HCT116 (cell line): ENCODE measurements at regions of chr17 and their contacts with region 1.

Region 1: GRCh38 chr17:50783193-50783660 is 15.9 kb upstream of the ANKRD40CL start:
- DNase-seq: peak; percentile 92
- ATAC-seq: peak; percentile 99
- H3K4me3 ChIP-seq: no peak overlapping the region
- H3K27ac ChIP-seq: no peak overlapping the region
- H3K4me1 ChIP-seq: peaks cover 0 to 9% of the 10 kb centered on the region in 2 experiments; a peak in 2 of 4 replicates
- H3K27me3 ChIP-seq: no peaks in the 10 kb centered on the region
- CTCF ChIP-seq: peak; percentile 98 to 100 (median 100)
- POLR2A ChIP-seq: no peak
- RAD21 ChIP-seq: peak; percentile 100

Region 2: GRCh38 chr17:50547035-50547735 is 236.0 kb before region 1 on chr17 and contains the start of gene SPATA20:
- CTCF ChIA-PET with region 1: interaction called, 3 read pairs
- POLR2A ChIA-PET with region 1: no interaction called
- RAD21 ChIA-PET with region 1: no interaction called
- intact Hi-C with region 1: loop called (anchors 2 kb)
- DNase-seq: peak; percentile 80
- ATAC-seq: peak; percentile 75
- H3K4me3 ChIP-seq: peak within 1 kb of the TSS; percentile 65 to 85
- H3K27ac ChIP-seq: peak within 1 kb of the TSS; percentile 75
- H3K4me1 ChIP-seq: peaks cover 27 to 58% of the 10 kb centered on the region in 2 experiments
- H3K27me3 ChIP-seq: no peaks in the 10 kb centered on the region
- CTCF ChIP-seq: peak in 2 of 3 experiments; percentile 98 to 100; a peak in 4 of 6 replicates
- POLR2A ChIP-seq: peak; percentile 79
- RAD21 ChIP-seq: no peak
- total RNA-seq, gene SPATA20: 57.5 TPM

Region 3: GRCh38 chr17:50771991-50772785 is 11.0 kb before region 1 on chr17:
- CTCF ChIA-PET with region 1: interaction called, 10 read pairs
- POLR2A ChIA-PET with region 1: no interaction called
- RAD21 ChIA-PET with region 1: interaction called, 3 to 11 read pairs
- intact Hi-C with region 1: no loop called
- DNase-seq: no peak
- ATAC-seq: no peak
- H3K4me3 ChIP-seq: no peak overlapping the region
- H3K27ac ChIP-seq: no peak overlapping the region
- H3K4me1 ChIP-seq: peaks cover 10% of the 10 kb centered on the region in 2 experiments; a peak in 3 of 4 replicates
- H3K27me3 ChIP-seq: no peaks in the 10 kb centered on the region
- CTCF ChIP-seq: no peak
- POLR2A ChIP-seq: no peak
- RAD21 ChIP-seq: no peak

Region 4: DNA sequence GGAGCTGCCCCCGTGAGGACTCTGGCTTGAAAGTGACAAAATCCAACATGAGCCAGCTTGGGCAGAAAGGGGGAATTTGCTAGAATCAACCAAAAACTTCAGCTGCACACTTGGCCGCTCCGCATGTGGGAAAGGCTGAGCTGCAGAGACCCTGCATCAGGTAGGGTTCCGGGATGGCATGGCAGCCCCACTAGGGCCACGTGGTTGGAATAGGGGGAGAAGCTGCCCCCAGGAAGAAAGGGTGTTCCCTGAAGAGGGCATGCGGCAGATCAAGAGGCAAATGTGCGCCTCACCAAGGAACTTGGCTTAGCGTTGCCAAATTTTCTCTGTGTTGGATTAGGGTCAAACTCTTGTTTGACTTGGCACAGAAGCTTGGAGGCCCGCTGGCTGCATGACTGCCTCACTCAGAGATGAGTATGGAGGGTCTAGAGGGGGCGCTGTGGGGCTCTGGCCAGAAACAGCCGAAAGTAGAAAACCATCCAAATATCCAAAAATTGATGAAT is 23.0 kb after region 1 on chr17:
- CTCF ChIA-PET with region 1: interaction called, 12 read pairs
- POLR2A ChIA-PET with region 1: no interaction called
- RAD21 ChIA-PET with region 1: no interaction called
- intact Hi-C with region 1: no loop called
- DNase-seq: no peak
- ATAC-seq: peak; percentile 67
- H3K4me3 ChIP-seq: no peak overlapping the region
- H3K27ac ChIP-seq: no peak overlapping the region
- H3K4me1 ChIP-seq: peaks cover 0 to 14% of the 10 kb centered on the region in 2 experiments; a peak in 2 of 4 replicates
- H3K27me3 ChIP-seq: no peaks in the 10 kb centered on the region
- CTCF ChIP-seq: peak in 2 of 3 experiments; percentile 51 to 53; a peak in 4 of 6 replicates
- POLR2A ChIP-seq: no peak
- RAD21 ChIP-seq: no peak

Region 5: GRCh38 chr17:50841949-50842354 is 58.7 kb after region 1 on chr17:
- CTCF ChIA-PET with region 1: interaction called, 127 read pairs
- POLR2A ChIA-PET with region 1: interaction called, 12 read pairs
- RAD21 ChIA-PET with region 1: interaction called, 15 to 19 read pairs
- intact Hi-C with region 1: loop called (anchors 1 kb)
- DNase-seq: peak; percentile 61
- ATAC-seq: peak; percentile 95
- H3K4me3 ChIP-seq: no peak overlapping the region
- H3K27ac ChIP-seq: no peak overlapping the region
- H3K4me1 ChIP-seq: peaks cover 0 to 22% of the 10 kb centered on the region in 2 experiments; a peak in 2 of 4 replicates
- H3K27me3 ChIP-seq: no peaks in the 10 kb centered on the region
- CTCF ChIP-seq: peak; percentile 94 to 97 (median 97)
- POLR2A ChIP-seq: no peak
- RAD21 ChIP-seq: peak; percentile 96

Region 6: GRCh38 chr17:50949989-50950881 is 167.0 kb after region 1 on chr17:
- CTCF ChIA-PET with region 1: interaction called, 28 read pairs
- POLR2A ChIA-PET with region 1: interaction called, 4 read pairs
- RAD21 ChIA-PET with region 1: interaction called, 3 to 8 read pairs
- intact Hi-C with region 1: loop called (anchors 1 kb)
- DNase-seq: peak; percentile 88
- ATAC-seq: peak; percentile 87
- H3K4me3 ChIP-seq: peak overlapping the region; percentile 29 to 42
- H3K27ac ChIP-seq: peak overlapping the region; percentile 79
- H3K4me1 ChIP-seq: peaks cover 74 to 97% of the 10 kb centered on the region in 2 experiments
- H3K27me3 ChIP-seq: no peaks in the 10 kb centered on the region
- CTCF ChIP-seq: peak; percentile 86 to 99 (median 97)
- POLR2A ChIP-seq: no peak
- RAD21 ChIP-seq: peak; percentile 100

Region 7: DNA sequence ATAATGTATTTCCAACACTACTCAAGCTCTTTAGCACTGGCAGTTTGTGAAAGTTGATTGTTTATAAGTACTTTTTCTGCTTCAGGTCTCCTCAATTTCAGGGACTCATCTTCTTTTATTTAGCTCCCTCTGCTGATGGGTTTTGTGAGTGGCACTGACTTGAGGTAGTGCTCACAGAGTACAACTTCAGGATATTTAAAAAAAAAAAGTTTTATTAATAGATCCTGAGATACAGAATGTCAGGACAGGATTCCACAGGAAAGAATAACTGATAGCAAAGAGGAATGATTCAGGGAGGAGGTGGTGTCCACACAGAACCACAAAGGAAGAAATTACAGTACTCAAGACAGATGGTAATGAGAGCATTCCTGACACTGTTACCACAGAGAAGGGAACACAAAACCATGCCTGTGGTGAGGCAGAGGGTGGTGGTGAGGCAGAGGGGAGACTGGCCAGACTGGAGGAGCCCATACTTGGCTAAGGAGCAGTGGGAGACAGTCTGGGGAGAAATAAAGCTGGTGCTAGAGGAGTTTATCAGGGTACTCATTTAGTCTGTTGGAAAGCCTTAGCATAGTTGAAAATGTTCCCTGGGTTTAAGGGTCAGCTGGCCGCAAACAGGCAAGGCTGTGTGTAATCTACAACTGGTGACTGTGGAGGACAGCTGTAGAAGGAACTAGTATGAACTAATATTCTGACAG is 273.7 kb after region 1 on chr17:
- CTCF ChIA-PET with region 1: interaction called, 4 read pairs
- POLR2A ChIA-PET with region 1: no interaction called
- RAD21 ChIA-PET with region 1: no interaction called
- intact Hi-C with region 1: loop called (anchors 5 kb)
- DNase-seq: peak; percentile 32
- ATAC-seq: peak; percentile 87
- H3K4me3 ChIP-seq: no peak overlapping the region
- H3K27ac ChIP-seq: no peak overlapping the region
- H3K4me1 ChIP-seq: peaks cover 4 to 25% of the 10 kb centered on the region in 2 experiments; a peak in 3 of 4 replicates
- H3K27me3 ChIP-seq: no peaks in the 10 kb centered on the region
- CTCF ChIP-seq: peak; percentile 50 to 73 (median 73); a peak in 5 of 6 replicates
- POLR2A ChIP-seq: no peak
- RAD21 ChIP-seq: peak; percentile 72